ENCODE measurements at regions of chr3 and their contacts with region 1.

Region 1: GRCh38 chr3:112013058-112013783 is 14.5 kb downstream of the TAGLN3 start:
- DNase-seq: peak; percentile 83
- ATAC-seq: peak; percentile 93
- H3K4me3 Mint-ChIP-seq: no peak overlapping the region
- H3K27ac Mint-ChIP-seq: peak overlapping the region; percentile 43
- H3K4me1 Mint-ChIP-seq: peaks cover 21% of the 10 kb centered on the region
- H3K27me3 Mint-ChIP-seq: no peaks in the 10 kb centered on the region
- CTCF ChIP-seq: peak; percentile 86

Region 2: DNA sequence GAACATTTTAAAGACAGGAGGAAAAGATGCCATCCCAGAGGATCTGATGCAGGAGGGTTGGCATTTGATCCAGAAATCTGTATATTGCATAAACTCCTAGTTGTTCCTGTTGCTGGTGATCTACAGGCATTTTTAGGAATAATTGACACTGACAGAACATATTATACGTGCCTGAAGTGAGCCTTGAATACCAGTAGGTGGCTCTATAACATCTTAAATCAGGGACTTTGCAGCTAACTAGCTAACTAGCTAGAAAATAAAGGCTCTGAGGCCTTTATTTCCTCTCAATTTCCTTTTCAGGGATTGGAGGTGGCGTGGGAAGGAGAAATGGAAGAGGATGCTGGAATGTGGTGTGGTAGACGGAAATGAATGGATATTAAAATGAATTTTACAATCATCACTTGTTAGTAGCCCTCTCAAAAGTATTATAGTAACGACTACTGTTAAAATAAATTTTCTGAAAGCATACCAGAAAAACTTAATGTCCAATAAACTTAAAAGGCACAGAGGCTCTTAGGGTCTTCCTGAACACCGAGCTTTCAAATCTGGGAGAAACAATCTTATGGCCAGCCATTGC is 344.2 kb before region 1 on chr3:
- CTCF ChIA-PET with region 1: interaction called, 26 read pairs
- POLR2A ChIA-PET with region 1: no interaction called
- intact Hi-C with region 1: no loop called
- DNase-seq: no peak
- ATAC-seq: peak; percentile 50
- H3K4me3 Mint-ChIP-seq: no peak overlapping the region
- H3K27ac Mint-ChIP-seq: peak overlapping the region; percentile 68
- H3K4me1 Mint-ChIP-seq: peaks cover 84% of the 10 kb centered on the region
- H3K27me3 Mint-ChIP-seq: no peaks in the 10 kb centered on the region
- CTCF ChIP-seq: peak; percentile 84

Region 3: GRCh38 chr3:111859974-111860859 is 153.0 kb before region 1 on chr3:
- CTCF ChIA-PET with region 1: interaction called, 20 read pairs
- POLR2A ChIA-PET with region 1: no interaction called
- intact Hi-C with region 1: no loop called
- DNase-seq: peak; percentile 75
- ATAC-seq: peak; percentile 72
- H3K4me3 Mint-ChIP-seq: peak overlapping the region; percentile 92
- H3K27ac Mint-ChIP-seq: peak overlapping the region; percentile 57
- H3K4me1 Mint-ChIP-seq: peaks cover 7% of the 10 kb centered on the region
- H3K27me3 Mint-ChIP-seq: peaks cover 22% of the 10 kb centered on the region
- CTCF ChIP-seq: peak; percentile 47

Region 4: DNA sequence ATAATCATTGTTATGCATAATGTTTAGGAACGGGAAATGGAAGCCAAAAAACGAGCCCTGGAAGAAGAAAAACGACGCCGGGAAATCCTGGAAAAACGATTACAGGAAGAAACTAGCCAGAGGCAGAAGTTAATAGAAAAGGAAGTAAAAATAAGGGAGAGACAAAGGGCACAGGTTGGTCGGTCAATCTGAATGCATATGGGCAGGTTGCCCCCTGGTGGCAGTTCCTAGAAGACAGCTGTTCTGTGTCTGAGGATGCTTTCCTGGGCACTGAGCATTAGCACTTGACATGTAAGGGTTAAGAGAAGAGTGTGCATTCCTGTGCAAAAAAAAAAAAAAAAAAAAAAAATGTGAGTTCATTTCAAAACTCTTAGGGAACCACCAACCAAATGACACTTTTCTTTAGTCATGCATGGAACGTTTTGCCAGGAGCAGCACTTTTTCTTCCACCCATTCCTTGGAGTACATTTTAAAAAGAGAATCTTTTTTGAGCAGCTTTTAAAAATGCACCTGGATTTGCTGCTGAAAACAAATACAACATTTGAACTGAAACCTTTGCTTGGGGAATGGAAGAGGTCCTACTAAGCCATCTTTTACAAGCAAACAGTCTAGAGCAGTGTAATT is 45.5 kb before region 1 on chr3:
- CTCF ChIA-PET with region 1: interaction called, 98 read pairs
- POLR2A ChIA-PET with region 1: no interaction called
- intact Hi-C with region 1: no loop called
- DNase-seq: peak; percentile 94
- ATAC-seq: peak; percentile 96
- H3K4me3 Mint-ChIP-seq: no peak overlapping the region
- H3K27ac Mint-ChIP-seq: peak overlapping the region; percentile 57
- H3K4me1 Mint-ChIP-seq: peaks cover 20% of the 10 kb centered on the region
- H3K27me3 Mint-ChIP-seq: no peaks in the 10 kb centered on the region
- CTCF ChIP-seq: peak; percentile 87

Region 5: GRCh38 chr3:111989061-111989678 is 24.1 kb before region 1 on chr3:
- CTCF ChIA-PET with region 1: interaction called, 477 read pairs
- POLR2A ChIA-PET with region 1: interaction called, 11 read pairs
- intact Hi-C with region 1: loop called (anchors 1 kb)
- DNase-seq: no peak
- ATAC-seq: peak; percentile 68
- H3K4me3 Mint-ChIP-seq: no peak overlapping the region
- H3K27ac Mint-ChIP-seq: peak overlapping the region; percentile 28
- H3K4me1 Mint-ChIP-seq: peaks cover 34% of the 10 kb centered on the region
- H3K27me3 Mint-ChIP-seq: no peaks in the 10 kb centered on the region
- CTCF ChIP-seq: peak; percentile 71

Region 6: DNA sequence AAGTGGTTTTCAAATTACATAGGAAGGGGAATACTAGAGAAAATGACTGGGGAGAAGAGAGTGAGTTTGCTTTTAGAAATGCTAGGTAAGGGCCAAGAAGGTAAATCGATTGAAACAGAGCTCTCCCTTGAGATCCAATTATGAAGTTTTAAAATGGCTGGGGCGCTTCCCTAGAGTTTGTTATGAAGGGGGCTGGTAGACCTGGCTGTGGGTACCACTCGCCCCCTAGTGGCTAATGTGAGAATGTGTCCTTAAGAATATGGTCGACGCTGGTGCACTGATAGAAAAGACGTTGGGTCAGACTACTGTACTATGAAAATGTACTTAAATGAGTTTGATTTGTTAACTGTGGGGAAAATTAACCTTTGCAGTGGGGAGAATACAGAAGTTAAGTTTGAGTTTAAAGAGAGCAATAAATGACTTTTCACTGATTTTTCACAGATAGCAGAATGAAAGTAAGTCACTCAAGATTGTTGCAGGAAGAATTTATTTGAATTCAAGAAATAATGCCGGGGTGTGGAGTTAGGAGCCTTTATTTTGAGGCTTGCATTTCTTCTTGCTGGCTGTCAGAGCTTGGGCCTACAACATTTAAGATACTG is 30.5 kb after region 1 on chr3:
- CTCF ChIA-PET with region 1: interaction called, 74 read pairs
- POLR2A ChIA-PET with region 1: no interaction called
- intact Hi-C with region 1: no loop called
- DNase-seq: peak; percentile 70
- ATAC-seq: peak; percentile 99
- H3K4me3 Mint-ChIP-seq: no peak overlapping the region
- H3K27ac Mint-ChIP-seq: no peak overlapping the region
- H3K4me1 Mint-ChIP-seq: peaks cover 2% of the 10 kb centered on the region
- H3K27me3 Mint-ChIP-seq: no peaks in the 10 kb centered on the region
- CTCF ChIP-seq: peak; percentile 89

Measured in activated CD8-positive, alpha-beta T cell treated with anti-CD3 and anti-CD28 coated beads for 36 hours (primary cell).